ENCODE measurements at regions of chr11 and their contacts with region 1.

Region 1: DNA sequence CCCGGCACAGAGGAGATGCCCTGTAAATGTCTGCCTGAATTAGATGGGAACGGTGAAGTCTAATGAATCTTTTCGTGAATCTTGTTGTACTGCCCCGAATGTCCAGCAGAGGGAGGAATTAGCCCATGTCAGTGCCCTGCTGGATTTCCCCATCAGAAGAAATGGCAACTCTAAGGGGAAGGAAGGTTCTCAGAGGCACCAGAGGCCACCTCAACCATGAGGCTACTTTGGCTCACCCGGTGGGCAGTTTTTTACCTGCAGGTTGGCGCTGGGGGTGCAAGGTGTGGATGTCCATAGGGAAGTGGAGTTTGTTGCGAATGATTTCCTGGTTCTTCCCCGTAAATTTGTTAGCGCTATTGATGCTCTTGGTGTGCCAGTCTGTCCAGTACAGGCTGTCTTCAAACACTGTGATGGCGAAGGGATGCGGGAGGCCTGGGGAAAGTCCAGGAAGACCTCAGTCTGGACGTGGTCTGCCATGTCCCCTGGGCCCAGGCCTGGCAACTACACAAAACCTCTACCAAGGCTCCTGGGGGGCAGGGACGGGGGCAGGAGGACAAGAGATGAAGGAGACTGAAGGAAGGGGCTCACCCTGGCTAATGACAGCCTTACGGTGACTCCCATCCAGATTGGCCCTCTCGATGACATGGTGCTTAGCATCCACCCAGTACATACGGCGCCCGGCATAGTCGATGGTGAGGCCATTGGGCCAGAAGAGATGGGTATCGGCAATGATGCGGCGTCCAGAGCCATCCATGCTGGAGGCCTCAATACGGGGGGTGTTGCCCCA is 28.5 kb downstream of the LRP4 start:
- DNase-seq: peak; percentile 66 to 78
- H3K4me3 ChIP-seq: no peak overlapping the region
- H3K27ac ChIP-seq: no peak overlapping the region
- H3K4me1 ChIP-seq: no peaks in the 10 kb centered on the region
- H3K27me3 ChIP-seq: no peaks in the 10 kb centered on the region
- CTCF ChIP-seq: peak; percentile 85 to 95 (median 94)
- POLR2A ChIP-seq: no peak

Region 2: DNA sequence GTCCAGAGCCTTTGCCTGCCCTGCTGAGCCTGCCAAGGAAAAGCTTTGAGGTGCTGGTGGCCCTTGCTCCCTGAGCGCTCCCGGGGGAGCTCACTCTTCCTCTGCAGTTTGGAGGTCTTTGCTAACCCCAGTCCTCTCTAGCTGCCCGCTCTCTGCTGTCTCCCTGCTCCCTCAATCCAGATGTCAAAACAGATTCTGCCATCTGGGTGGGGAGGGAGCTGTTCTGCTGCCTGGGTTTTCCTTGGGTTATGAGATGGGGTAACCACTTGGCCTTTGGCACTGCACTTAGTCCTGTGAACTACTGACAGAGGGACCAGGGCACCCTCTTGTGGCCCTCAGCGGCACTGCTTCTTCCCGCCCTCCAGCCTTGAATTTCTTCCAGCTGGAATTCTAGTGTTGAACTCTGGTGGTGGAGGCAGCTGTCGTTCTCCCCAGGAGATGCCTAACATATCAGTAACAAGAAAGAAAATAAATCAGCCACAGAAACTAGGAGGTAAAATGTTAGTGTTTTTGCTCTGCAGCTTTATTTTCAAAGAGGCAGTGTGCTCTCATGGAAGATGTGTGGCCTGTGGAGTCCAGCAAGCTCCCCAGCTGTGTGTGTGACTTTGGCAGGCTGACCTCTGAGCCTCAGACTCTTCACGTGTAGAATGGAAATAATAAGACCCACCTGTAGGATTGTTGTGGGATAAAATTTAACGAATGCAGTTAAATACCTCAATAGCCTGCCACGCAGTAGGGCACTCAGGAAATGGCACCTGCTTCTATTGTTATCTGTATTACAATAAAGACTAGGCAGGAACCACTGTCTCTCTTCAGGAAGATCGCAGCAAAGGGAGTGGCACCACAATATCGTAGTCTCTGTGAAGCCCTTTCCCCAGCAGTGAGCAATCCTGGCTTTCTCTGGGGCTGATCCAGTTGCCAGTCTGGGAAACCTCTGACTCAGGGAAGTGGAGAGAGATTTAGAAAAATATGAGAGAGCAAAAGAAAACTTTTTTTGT is 263.4 kb after region 1 on chr11:
- intact Hi-C with region 1: loop called (anchors 5 kb)
- DNase-seq: peak; percentile 79 to 85
- H3K4me3 ChIP-seq: no peak overlapping the region
- H3K27ac ChIP-seq: peak overlapping the region in 1 of 2 donors; percentile 21
- H3K4me1 ChIP-seq: peaks cover 0 to 3% of the 10 kb centered on the region in 2 donors
- H3K27me3 ChIP-seq: no peaks in the 10 kb centered on the region
- CTCF ChIP-seq: peak; percentile 86 to 95 (median 92)
- POLR2A ChIP-seq: no peak

Region 3: DNA sequence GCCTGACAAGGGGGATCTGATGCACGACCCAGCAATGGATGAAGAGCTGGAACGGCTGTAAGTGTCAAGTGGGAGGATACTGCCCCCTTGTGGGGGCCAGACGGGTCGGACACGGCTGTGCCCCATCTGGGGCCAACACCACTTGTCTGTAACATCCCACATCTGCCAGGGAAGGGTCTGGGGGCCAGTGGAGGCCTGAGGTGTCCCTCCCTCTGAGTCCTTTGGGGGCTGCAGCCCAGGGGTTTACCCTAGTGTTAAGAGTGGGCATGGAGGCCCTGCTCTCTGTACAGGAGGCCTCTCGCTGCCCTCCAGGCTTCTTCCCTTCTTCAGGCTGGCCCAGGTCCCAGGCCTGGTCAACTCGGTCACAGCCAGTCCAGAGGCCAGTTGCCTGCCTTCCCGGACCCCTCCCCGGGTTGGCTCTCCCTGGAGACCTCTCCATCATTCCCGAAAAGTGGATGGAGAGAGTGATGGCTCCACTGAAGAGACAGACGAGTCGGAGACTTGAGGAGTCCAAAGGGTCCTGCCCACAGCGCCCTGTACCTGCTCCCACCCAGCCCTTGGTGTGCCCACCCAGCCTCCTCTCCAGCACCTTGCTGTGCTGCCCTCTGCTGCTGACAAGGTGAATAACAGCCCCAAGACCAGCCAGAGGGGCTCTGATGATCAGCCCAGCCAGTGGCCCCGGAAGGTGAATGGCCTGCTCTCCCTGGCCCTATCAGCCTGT is 271.4 kb after region 1 on chr11:
- intact Hi-C with region 1: loop called (anchors 5 kb)
- DNase-seq: peak; percentile 53 to 62
- H3K4me3 ChIP-seq: no peak overlapping the region
- H3K27ac ChIP-seq: peak overlapping the region in 1 of 2 donors; percentile 3
- H3K4me1 ChIP-seq: no peaks in the 10 kb centered on the region
- H3K27me3 ChIP-seq: no peaks in the 10 kb centered on the region
- CTCF ChIP-seq: peak; percentile 34 to 68 (median 48)
- POLR2A ChIP-seq: no peak

Region 4: GRCh38 chr11:47269002-47269828 is 379.3 kb after region 1 on chr11:
- intact Hi-C with region 1: loop called (anchors 5 kb)
- DNase-seq: peak; percentile 90 to 91
- H3K4me3 ChIP-seq: peak overlapping the region; percentile 74 to 86
- H3K27ac ChIP-seq: peak overlapping the region; percentile 95 to 97
- H3K4me1 ChIP-seq: peaks cover 0 to 4% of the 10 kb centered on the region in 2 donors
- H3K27me3 ChIP-seq: no peaks in the 10 kb centered on the region
- CTCF ChIP-seq: peak in 2 of 4 experiments; percentile 3 to 28
- POLR2A ChIP-seq: no peak